ENCODE measurements at regions of chr2 and their contacts with region 1.

Region 1: DNA sequence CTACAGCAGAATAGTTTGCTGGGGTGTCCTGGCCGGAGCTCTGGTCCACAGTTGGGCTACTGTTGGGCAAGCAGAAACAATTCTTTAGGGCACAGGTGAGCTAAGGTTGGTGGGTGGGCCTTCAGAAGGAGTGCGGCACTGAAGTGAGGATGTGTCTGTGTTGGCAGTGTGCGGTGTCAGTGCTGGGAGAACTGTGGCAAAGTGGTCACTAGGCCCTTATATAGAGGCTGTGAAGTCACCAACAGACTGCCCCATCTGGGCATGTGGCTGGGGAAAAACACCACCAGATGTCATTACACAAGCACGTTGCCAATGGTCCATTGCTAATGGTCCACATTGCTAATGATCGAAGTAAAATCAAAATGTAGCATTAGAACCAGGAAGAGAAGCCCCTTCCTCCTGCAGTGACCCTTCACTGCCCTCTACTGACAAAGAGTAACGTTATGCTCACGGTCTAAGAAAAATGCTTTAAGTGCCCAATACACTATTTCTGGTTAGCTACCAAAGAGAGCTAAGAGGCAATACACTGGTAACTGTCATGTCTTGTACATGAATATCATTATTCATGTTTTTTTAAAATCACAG is 21.3 kb downstream of the SCN1A start:
- DNase-seq: peak; percentile 38 to 47 (median 42)
- H3K4me3 ChIP-seq: no peak overlapping the region
- H3K4me3 Mint-ChIP-seq: no peak overlapping the region
- H3K27ac ChIP-seq: no peak overlapping the region
- H3K27ac Mint-ChIP-seq: peak overlapping the region in 2 of 7 donors; percentile 41 to 73
- H3K4me1 ChIP-seq: no peaks in the 10 kb centered on the region
- H3K4me1 Mint-ChIP-seq: no peaks in the 10 kb centered on the region
- H3K27me3 ChIP-seq: no peaks in the 10 kb centered on the region
- H3K27me3 Mint-ChIP-seq: peaks cover 0 to 3% (median 2%) of the 10 kb centered on the region in 3 donors
- CTCF ChIP-seq: peak; percentile 73

Region 2: DNA sequence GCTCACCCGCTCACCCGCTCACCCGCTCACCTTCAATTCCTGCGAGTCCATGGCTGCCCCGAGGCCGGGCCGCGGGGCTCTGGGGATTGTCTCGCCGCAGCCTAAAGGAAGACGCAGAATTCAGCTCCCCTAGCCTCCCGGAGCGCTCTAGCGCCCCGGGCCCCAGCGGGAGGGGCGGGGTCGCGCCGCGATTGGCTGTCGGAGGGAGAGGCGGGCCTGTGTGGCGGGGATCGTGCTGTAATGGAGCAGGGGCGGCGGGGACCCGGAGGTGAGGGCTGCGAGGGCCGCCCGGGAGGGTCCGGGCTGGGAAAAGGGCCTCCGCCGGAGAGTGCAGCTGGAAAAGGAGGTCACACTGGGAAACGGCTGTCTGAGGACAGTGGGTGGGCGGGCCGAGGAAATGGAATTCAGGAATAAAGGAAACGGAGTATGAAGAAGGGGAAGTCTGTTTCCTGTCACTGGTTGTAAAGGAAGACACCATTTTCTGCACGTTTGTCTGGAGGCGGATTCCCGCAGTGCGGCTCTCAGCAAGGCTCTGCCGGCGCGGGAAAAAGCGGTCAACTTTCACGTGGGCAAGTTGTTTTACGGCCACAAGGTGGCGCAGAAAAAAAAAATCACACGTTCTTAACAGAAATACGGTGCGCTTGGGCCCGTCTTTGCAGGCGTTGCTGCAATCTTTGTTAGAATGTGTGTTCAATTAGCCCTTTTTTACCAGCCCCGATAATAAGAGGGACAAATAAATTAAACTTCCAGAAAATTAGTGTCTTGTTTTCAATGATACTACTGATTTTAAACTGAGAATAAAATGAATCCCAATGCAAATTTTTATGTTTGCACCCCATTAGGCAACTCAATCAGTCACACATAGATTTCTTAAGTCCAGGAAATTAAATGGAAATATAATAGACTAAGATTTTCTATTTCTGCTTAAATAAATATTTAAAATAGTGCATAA is 152.6 kb before region 1 on chr2 and contains the start of gene TTC21B:
- intact Hi-C with region 1: loop called in 1 of 2 experiments (anchors 10 kb)
- DNase-seq: peak; percentile 83 to 89 (median 84)
- H3K4me3 ChIP-seq: peak within 1 kb of the TSS; percentile 73 to 85 (median 76)
- H3K4me3 Mint-ChIP-seq: no peak within 1 kb of the TSS
- H3K27ac ChIP-seq: peak within 1 kb of the TSS; percentile 75 to 83
- H3K27ac Mint-ChIP-seq: no peak within 1 kb of the TSS
- H3K4me1 ChIP-seq: peaks cover 20 to 28% of the 10 kb centered on the region in 2 donors
- H3K4me1 Mint-ChIP-seq: peaks cover 11% of the 10 kb centered on the region
- H3K27me3 ChIP-seq: no peaks in the 10 kb centered on the region
- H3K27me3 Mint-ChIP-seq: peaks cover 0 to 5% (median 2%) of the 10 kb centered on the region in 3 donors
- CTCF ChIP-seq: peak; percentile 94
- polyA plus RNA-seq, gene TTC21B: 3.1 to 6.7 (median 3.8) TPM

Region 3: DNA sequence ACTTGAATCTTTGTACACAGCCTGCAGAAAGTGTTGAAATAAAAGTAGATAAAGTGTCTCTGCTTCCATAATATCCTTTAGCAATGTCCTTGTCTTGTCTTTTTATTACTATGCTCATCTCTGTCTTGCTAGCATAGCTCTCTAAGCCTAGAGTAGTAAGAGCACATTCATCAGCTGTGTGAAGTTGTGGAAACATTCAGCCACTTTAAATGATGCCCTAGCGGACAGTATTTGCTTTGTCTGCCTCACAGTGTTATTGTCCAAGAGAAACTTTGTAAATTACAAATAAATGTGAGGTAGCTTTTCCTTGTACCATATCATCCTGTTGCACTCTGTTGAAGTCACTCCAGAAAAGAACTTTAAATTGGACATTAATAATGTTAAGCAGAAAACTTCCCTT is 92.6 kb before region 1 on chr2:
- intact Hi-C with region 1: no loop called
- DNase-seq: no peak
- H3K4me3 ChIP-seq: no peak overlapping the region
- H3K4me3 Mint-ChIP-seq: no peak overlapping the region
- H3K27ac ChIP-seq: no peak overlapping the region
- H3K27ac Mint-ChIP-seq: no peak overlapping the region
- H3K4me1 ChIP-seq: no peaks in the 10 kb centered on the region
- H3K4me1 Mint-ChIP-seq: no peaks in the 10 kb centered on the region
- H3K27me3 ChIP-seq: no peaks in the 10 kb centered on the region
- H3K27me3 Mint-ChIP-seq: peaks cover 0 to 4% (median 0%) of the 10 kb centered on the region in 3 donors
- CTCF ChIP-seq: no peak

Measured in CD14-positive monocyte (primary cell).